HEK293 (cell line): ENCODE measurements at regions of chr6 and their contacts with region 1.

Region 1: DNA sequence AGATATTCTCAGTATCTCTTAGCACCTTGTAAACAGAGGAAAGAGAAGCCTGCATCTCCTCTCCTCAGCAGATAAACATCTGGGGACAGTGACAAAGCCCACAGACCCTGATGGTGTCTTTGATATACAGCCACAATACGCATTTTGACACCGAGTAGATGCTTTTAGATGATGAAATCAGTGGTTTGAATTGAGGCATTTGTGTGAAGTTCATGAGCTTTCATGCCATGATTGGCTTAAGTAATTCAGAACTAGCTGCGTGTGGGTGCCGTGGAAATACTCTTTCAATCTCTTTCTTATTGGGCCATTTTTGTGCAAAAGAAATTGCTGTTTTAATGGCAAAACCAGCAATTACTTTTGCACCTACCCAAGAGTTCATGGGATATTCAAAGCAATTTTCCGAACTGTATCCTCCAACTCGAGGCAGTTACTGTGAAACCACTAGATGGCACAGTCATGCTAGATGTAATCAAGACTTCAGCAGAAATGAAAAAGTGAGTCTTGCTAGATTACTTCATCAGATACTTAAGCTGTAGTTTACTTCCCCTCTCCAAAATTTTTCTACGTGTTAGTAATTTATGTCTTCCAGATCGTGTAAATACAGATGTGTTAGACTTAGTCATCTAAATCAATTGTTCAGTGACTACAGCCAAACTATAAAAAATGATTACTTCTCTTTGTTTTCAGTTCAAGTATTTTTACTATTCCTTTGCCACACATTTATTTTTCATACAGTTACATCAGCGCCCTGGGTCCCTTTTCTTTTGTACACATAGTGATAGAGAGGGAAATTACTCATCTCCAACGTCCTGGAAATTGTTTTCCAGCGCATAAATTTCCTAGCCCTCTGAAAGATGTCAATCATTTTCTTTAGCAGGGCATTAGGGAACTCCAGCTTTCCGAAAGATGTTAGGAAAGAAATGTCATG is 49.4 kb downstream of the IYD start:
- H3K4me3 ChIP-seq: no peak overlapping the region; the same call in 1 of the 2 replicates
- H3K27ac ChIP-seq: peak overlapping the region; percentile 78
- H3K4me1 ChIP-seq: peaks cover 8% of the 10 kb centered on the region; the same call in 1 of the 2 replicates
- CTCF ChIP-seq: peak; percentile 83

Region 2: DNA sequence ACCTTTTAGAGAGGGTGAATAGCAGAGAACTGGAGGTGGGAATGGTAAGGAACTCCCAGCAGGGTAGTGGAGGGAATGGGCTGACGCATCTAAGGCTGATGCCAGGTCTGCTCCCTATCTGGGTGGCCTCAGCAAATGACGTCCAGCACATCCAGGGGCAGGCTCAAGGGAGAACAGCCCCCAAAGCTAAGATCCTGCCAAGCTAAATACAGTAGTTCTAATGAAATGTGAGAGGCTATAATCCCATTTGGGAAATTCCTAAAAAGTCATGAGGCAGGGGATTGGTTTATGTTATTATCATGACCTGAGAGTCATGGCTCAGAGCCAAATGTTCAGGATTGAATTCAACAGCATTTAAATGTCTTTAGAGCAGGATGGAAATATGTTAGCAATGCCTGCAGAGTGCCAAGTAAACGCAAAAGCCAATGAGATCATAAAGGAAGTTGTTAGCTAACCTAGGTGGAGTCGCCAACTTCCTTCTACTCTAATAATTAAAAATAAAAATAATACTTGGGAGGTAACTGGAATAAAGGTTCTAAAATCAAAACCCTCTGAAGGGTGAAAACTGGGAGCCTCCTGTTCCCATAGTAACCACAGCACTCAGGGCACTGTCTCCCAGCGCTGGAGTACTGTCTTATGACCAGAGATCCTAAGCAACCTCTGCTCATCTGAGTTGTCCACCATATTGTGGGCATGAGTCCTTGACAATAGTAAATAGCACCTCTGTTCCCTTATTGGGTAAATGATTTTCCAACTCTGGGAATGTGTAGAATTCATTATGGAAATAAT is 14.5 kb before region 1 on chr6:
- CTCF ChIA-PET with region 1: interaction called, 20 read pairs
- POLR2A ChIA-PET with region 1: no interaction called
- H3K4me3 ChIP-seq: no peak overlapping the region
- H3K27ac ChIP-seq: peak overlapping the region; percentile 44
- H3K4me1 ChIP-seq: peaks cover 13% of the 10 kb centered on the region
- CTCF ChIP-seq: no peak

Region 3: DNA sequence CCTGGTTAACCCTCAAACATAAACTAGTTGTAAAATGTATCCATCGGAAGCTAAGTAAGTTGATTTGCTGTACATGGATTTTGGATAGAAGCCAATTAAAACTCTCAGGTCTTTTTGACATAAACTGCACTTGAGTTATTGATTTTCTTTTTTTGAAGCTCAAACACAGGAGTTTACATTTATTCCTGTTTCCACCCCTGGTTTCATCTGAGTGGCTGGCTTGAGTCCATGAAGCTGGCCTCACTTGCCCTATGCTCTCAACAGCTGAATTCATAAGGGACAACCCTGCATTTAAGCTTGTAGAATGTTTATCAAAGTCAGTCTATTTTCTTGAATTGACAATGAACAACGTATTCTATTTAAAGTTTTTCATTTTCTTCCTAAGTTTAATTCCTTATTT is 123.4 kb after region 1 on chr6:
- CTCF ChIA-PET with region 1: interaction called, 21 read pairs
- POLR2A ChIA-PET with region 1: no interaction called
- H3K4me3 ChIP-seq: no peak overlapping the region
- H3K27ac ChIP-seq: no peak overlapping the region
- H3K4me1 ChIP-seq: peaks cover 10% of the 10 kb centered on the region
- CTCF ChIP-seq: no peak

Region 4: GRCh38 chr6:150592377-150592995 is 174.3 kb after region 1 on chr6:
- CTCF ChIA-PET with region 1: interaction called, 38 read pairs
- POLR2A ChIA-PET with region 1: no interaction called
- H3K4me3 ChIP-seq: no peak overlapping the region
- H3K27ac ChIP-seq: 0 out of 2 replicates have a peak overlapping the region, but pooled peaks have one; percentile 10
- H3K4me1 ChIP-seq: peaks cover 13% of the 10 kb centered on the region
- CTCF ChIP-seq: no peak

Region 5: DNA sequence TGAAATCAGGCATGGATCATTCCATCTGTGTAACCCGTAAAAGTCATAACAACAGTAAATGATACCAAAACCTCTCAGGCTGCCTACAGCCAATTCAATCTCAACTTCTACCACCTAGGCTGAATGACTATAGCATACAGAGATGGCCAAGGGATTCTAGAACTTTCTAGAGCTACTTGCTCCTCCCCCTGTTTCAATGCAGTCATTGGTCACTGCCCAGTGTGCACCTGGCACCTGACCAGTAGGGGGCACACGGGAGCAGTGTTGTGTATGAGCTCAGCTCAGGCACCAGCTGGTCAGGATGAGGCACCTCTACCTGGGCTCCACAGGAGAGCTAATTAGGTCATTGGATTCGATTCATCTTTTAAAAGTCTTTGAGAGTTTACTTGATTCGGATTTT is 267.7 kb after region 1 on chr6:
- CTCF ChIA-PET with region 1: interaction called, 28 read pairs
- POLR2A ChIA-PET with region 1: no interaction called
- H3K4me3 ChIP-seq: no peak overlapping the region
- H3K27ac ChIP-seq: no peak overlapping the region
- H3K4me1 ChIP-seq: peaks cover 12% of the 10 kb centered on the region; the same call in 1 of the 2 replicates
- CTCF ChIP-seq: peak; percentile 59; the same call in 1 of the 2 replicates

Region 6: GRCh38 chr6:150741633-150742504 is 323.7 kb after region 1 on chr6:
- CTCF ChIA-PET with region 1: interaction called, 10 read pairs
- POLR2A ChIA-PET with region 1: no interaction called
- H3K4me3 ChIP-seq: no peak overlapping the region
- H3K27ac ChIP-seq: no peak overlapping the region
- H3K4me1 ChIP-seq: peaks cover 16% of the 10 kb centered on the region
- CTCF ChIP-seq: no peak

Region 7: DNA sequence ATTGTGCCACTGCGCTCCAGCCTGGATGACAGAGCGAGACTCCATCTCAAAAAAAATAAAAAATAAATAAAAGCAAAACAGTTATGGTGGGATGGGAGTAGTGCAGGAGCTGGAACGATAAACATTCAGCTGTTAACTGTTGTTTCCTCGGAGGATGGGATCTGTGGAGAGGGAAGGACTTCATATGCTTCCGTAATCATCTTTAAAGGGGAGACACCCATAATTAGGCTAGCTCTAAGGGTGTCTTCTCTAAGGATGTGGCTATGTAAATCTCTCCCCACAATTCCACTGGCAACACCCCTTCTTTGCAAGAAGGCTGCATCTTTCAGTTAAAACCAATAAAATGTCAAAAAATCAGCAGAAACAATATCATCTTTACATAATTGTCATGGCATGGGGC is 404.8 kb after region 1 on chr6:
- CTCF ChIA-PET with region 1: interaction called, 168 read pairs
- POLR2A ChIA-PET with region 1: no interaction called
- H3K4me3 ChIP-seq: no peak overlapping the region
- H3K27ac ChIP-seq: no peak overlapping the region
- H3K4me1 ChIP-seq: no peaks in the 10 kb centered on the region
- CTCF ChIP-seq: no peak